Naive thymus-derived CD4-positive, alpha-beta T cell (primary cell): ENCODE measurements at regions of chr17 and their contacts with region 1.

Region 1: DNA sequence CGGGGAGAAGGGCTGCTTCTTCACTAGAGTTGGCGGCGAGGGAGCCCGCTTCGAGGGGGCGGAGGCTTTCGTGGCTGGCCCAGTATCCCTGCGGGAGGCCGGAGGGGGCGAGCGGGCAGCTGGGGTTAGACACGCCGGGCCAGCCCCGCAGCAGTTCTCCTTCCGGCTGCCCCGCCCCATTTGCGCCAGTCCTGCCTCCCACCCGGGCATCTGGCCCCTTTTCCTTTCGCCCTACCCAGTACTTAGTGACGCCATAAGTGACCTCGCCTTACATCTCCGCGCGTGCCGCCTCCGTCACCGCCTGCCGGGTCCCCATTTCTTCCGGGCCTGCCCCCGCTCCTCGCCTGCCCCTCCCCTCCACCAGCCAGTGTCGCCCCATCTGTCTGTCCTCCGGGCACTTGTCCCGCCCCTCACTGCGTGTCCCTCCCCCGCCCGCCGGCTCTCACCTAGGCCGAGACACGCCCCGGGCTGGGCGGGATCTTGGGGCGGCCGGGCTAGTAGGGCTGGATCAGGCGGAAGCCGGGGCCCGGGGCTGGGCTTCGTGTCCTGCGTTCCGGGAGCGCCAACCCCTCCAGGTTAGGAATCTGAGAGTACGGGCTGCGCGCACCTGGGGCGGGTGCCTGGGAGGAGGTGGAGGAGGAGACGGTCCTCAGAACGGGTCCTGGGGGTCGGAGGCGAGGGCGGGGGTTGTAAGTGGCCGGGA is 14.3 kb downstream of the SPATA32 start:
- DNase-seq: peak; percentile 83 to 96 (median 87)
- ATAC-seq: peak; percentile 88
- H3K4me3 ChIP-seq: peak overlapping the region; percentile 89
- H3K4me3 Mint-ChIP-seq: peak overlapping the region; percentile 88 to 93 (median 90)
- H3K27ac ChIP-seq: peak overlapping the region; percentile 95
- H3K27ac Mint-ChIP-seq: peak overlapping the region; percentile 89 to 98 (median 96)
- H3K4me1 ChIP-seq: peaks cover 26 to 42% of the 10 kb centered on the region in 2 donors
- H3K4me1 Mint-ChIP-seq: peaks cover 30 to 68% (median 61%) of the 10 kb centered on the region in 7 donors
- H3K27me3 ChIP-seq: no peaks in the 10 kb centered on the region
- H3K27me3 Mint-ChIP-seq: no peaks in the 10 kb centered on the region

Region 2: DNA sequence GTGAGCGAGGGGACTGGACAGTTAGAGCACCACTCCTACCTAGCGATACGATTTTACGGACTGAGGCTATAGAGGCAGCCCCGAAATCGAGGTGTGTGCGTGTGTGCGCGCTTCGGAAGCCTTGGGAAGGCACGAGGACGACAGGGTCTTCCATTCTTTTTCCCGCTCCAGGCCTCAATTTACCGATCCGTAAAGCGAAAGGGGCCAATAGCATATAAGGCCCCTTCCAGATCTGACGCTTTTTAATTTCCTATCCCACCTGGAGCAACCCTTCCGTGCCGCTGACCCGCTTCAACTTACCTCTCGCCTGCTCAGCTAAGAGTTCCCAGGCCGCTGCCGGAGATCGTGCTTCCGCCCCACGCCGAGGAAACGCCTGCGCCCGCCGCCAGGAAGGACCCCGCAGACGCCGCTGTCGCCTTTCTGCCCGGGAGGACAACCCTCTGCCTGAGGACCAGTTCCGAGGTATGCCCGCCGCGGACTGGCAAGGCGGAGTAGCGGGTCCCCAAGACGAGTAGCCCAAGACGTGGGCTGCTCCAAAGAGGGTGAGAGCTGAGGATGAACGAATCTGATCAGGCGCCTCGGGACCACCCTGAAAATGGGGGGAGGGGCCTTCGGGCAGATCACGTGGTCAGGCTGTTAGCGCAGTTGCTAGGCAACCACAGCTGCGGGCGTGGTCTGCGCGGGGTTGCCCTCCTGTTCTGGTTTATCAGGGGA is 348.4 kb before region 1 on chr17 and contains the start of gene EFTUD2:
- CTCF ChIA-PET with region 1: no interaction called
- POLR2A ChIA-PET with region 1: no interaction called
- intact Hi-C with region 1: loop called in 1 of 2 experiments (anchors 5 kb)
- DNase-seq: peak; percentile 91 to 99 (median 96)
- ATAC-seq: peak; percentile 94
- H3K4me3 ChIP-seq: peak within 1 kb of the TSS; percentile 89
- H3K4me3 Mint-ChIP-seq: peak within 1 kb of the TSS; percentile 84 to 97 (median 96)
- H3K27ac ChIP-seq: peak within 1 kb of the TSS; percentile 96
- H3K27ac Mint-ChIP-seq: peak within 1 kb of the TSS; percentile 99 to 100 (median 99)
- H3K4me1 ChIP-seq: peaks cover 6 to 10% of the 10 kb centered on the region in 2 donors
- H3K4me1 Mint-ChIP-seq: peaks cover 26 to 41% (median 35%) of the 10 kb centered on the region in 7 donors
- H3K27me3 ChIP-seq: no peaks in the 10 kb centered on the region
- H3K27me3 Mint-ChIP-seq: peaks cover 0 to 23% (median 0%) of the 10 kb centered on the region in 5 donors
- total RNA-seq, gene EFTUD2: 94.3 to 157 (median 120) TPM

Region 3: DNA sequence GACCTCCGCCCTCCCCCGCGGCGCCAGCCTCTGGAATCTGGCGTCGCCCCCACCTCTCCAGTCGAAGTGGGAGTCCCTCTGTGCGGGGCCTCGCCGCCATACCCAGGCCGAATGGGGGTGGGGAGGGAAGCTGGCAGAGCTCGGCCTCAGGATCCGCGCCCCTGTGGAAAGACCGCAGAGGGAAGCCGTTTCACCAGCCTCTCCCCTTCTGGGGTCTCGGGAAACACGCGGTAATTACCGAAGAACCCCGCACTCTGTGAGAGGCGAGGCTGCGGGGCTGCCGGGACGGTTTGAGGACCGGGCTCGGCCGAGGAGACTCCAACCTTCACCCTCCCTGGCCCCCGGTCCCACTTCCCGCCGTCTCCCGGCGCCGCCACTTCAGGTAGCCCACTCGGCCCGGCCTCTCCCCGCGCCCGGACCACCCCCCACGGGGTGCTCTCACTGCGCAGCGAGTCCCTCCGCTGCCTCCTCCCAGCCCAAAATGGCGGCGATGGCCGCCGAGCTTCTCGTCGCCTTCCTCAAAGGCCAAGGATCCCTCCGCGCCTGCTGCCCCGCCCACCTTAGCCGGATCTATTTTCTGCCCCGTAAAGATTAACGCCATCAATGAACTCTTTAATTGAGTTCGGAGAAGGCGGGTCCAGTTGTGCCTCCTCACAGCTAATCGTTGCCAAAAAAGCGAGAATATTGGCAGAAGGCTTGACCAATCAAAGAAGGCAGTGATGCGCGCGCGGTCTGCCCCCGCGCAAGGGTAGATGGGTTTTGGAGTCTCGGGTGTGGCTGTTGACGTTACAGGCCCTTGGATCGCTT is 86.4 kb before region 1 on chr17:
- CTCF ChIA-PET with region 1: interaction called, 4 read pairs
- POLR2A ChIA-PET with region 1: interaction called, 12 read pairs
- intact Hi-C with region 1: loop called in 1 of 2 experiments (anchors 1 kb)
- DNase-seq: peak; percentile 89 to 100 (median 99)
- ATAC-seq: peak; percentile 93
- H3K4me3 ChIP-seq: peak overlapping the region; percentile 95
- H3K4me3 Mint-ChIP-seq: peak overlapping the region; percentile 88 to 100 (median 96)
- H3K27ac ChIP-seq: peak overlapping the region; percentile 98
- H3K27ac Mint-ChIP-seq: peak overlapping the region; percentile 97 to 100 (median 98)
- H3K4me1 ChIP-seq: peaks cover 15 to 27% of the 10 kb centered on the region in 2 donors
- H3K4me1 Mint-ChIP-seq: peaks cover 29 to 48% (median 43%) of the 10 kb centered on the region in 7 donors
- H3K27me3 ChIP-seq: no peaks in the 10 kb centered on the region
- H3K27me3 Mint-ChIP-seq: no peaks in the 10 kb centered on the region

Region 4: GRCh38 chr17:45228763-45229539 is 18.6 kb before region 1 on chr17:
- CTCF ChIA-PET with region 1: interaction called, 33 read pairs
- POLR2A ChIA-PET with region 1: interaction called, 851 read pairs
- intact Hi-C with region 1: loop called (anchors 1 kb)
- DNase-seq: peak; percentile 64 to 92 (median 74)
- ATAC-seq: peak; percentile 66
- H3K4me3 ChIP-seq: peak overlapping the region; percentile 91
- H3K4me3 Mint-ChIP-seq: peak overlapping the region; percentile 83 to 99 (median 96)
- H3K27ac ChIP-seq: peak overlapping the region; percentile 96
- H3K27ac Mint-ChIP-seq: peak overlapping the region; percentile 96 to 100 (median 99)
- H3K4me1 ChIP-seq: peaks cover 62 to 77% of the 10 kb centered on the region in 2 donors
- H3K4me1 Mint-ChIP-seq: peaks cover 54 to 91% (median 77%) of the 10 kb centered on the region in 7 donors
- H3K27me3 ChIP-seq: no peaks in the 10 kb centered on the region
- H3K27me3 Mint-ChIP-seq: no peaks in the 10 kb centered on the region

Region 5: GRCh38 chr17:45261577-45262515 is 14.3 kb after region 1 on chr17 and contains the start of gene SPATA32:
- CTCF ChIA-PET with region 1: interaction called, 8 read pairs
- POLR2A ChIA-PET with region 1: interaction called, 16 read pairs
- intact Hi-C with region 1: loop called (anchors 1 kb)
- DNase-seq: peak; percentile 45 to 69 (median 66)
- ATAC-seq: peak; percentile 83
- H3K4me3 ChIP-seq: peak within 1 kb of the TSS; percentile 52
- H3K4me3 Mint-ChIP-seq: peak within 1 kb of the TSS; percentile 77 to 89 (median 84)
- H3K27ac ChIP-seq: peak within 1 kb of the TSS; percentile 85
- H3K27ac Mint-ChIP-seq: peak within 1 kb of the TSS; percentile 58 to 93 (median 86)
- H3K4me1 ChIP-seq: peaks cover 10 to 31% of the 10 kb centered on the region in 2 donors
- H3K4me1 Mint-ChIP-seq: peaks cover 22 to 55% (median 45%) of the 10 kb centered on the region in 7 donors
- H3K27me3 ChIP-seq: no peaks in the 10 kb centered on the region
- H3K27me3 Mint-ChIP-seq: no peaks in the 10 kb centered on the region
- total RNA-seq, gene SPATA32: 0.12 to 1.1 (median 0.58) TPM in 4 of 5 experiments, not detected in the other

Region 6: GRCh38 chr17:45284176-45285140 is 36.9 kb after region 1 on chr17:
- CTCF ChIA-PET with region 1: no interaction called
- POLR2A ChIA-PET with region 1: no interaction called
- intact Hi-C with region 1: no loop called
- DNase-seq: peak in 3 of 9 donors; percentile 24 to 36 (median 29)
- ATAC-seq: peak; percentile 65
- H3K4me3 ChIP-seq: no peak overlapping the region
- H3K4me3 Mint-ChIP-seq: no peak overlapping the region
- H3K27ac ChIP-seq: no peak overlapping the region
- H3K27ac Mint-ChIP-seq: peak overlapping the region in 8 of 9 donors; percentile 3 to 90 (median 68)
- H3K4me1 ChIP-seq: no peaks in the 10 kb centered on the region
- H3K4me1 Mint-ChIP-seq: peaks cover 0 to 11% (median 2%) of the 10 kb centered on the region in 7 donors
- H3K27me3 ChIP-seq: no peaks in the 10 kb centered on the region
- H3K27me3 Mint-ChIP-seq: no peaks in the 10 kb centered on the region

Region 7: DNA sequence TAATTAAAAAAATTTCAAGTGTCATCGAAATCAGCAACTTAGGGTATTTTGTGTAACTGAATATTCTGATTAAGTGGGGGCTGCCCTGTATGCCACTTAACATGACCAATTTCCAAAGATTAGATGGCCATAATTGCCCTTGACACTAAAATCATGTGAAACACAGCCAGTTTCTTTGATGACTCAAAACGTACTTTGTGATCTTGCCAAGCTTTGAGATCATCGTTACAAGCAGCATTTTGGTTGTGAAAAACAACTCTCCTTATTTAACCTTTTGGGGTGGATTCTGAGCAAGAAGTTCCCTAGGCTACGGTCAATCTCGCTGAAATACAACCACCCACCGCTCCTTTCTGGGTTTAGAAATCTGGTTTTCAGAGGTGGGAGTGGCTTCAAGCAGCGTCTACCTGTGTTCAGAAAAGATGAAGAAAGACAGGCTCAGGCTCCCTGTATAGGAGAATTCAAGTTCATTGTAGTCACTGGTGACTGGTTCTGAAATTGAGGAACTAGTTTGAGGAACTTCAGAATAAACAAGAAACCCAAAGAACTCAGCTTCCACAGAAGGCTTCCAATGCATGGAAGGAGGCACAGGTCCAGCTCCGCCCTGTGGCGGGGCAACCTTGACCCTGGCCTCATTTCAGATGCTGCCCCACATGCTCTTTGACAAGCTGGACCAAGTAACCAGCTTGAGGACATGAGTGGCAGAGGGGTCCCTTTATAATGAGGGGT is 59.9 kb after region 1 on chr17:
- CTCF ChIA-PET with region 1: interaction called, 12 read pairs
- POLR2A ChIA-PET with region 1: interaction called, 16 read pairs
- intact Hi-C with region 1: loop called in 1 of 2 experiments (anchors 1 kb)
- DNase-seq: peak in 6 of 9 donors; percentile 27 to 57 (median 45)
- ATAC-seq: peak; percentile 75
- H3K4me3 ChIP-seq: peak overlapping the region; percentile 13
- H3K4me3 Mint-ChIP-seq: peak overlapping the region in 8 of 10 donors; percentile 15 to 74 (median 50)
- H3K27ac ChIP-seq: peak overlapping the region; percentile 48
- H3K27ac Mint-ChIP-seq: peak overlapping the region; percentile 71 to 93 (median 83)
- H3K4me1 ChIP-seq: peaks cover 31 to 51% of the 10 kb centered on the region in 2 donors
- H3K4me1 Mint-ChIP-seq: peaks cover 56 to 87% (median 80%) of the 10 kb centered on the region in 7 donors
- H3K27me3 ChIP-seq: no peaks in the 10 kb centered on the region
- H3K27me3 Mint-ChIP-seq: no peaks in the 10 kb centered on the region

Region 8: DNA sequence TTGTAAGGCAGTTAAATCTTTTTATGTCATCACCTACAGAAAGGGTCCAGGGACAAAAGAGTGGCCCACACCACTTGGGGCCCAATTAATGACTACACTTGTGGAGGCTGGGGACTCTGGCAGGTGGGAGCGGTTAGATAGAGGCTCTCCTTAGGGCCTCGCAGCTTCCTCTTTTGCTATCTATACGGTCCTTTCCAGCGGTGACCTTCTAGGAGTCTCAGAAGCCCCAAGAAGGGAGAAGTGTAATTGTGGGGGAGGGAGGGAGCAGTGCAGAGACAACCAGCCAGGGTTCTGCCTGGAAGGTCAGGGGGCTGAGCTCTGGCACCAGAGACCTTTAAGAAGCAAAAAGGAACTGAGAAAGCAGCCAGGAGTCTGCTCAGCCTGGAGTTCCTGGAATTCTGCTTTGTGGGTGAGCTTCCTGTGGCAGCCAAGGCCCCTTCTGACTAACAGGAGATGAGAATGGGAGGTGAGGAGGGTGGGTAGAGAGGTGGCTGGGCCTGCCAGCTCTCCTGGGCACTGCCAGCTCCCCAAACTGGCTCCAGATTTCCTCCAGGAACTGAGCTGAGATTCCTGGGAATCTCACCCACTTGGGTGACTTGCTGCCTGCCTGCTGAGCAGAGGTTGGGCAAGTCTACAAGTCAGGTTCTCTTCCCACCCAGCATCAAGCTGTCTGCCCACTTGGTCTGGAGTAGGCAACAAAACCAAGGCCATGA is 85.6 kb after region 1 on chr17:
- CTCF ChIA-PET with region 1: no interaction called
- POLR2A ChIA-PET with region 1: no interaction called
- intact Hi-C with region 1: no loop called
- DNase-seq: no peak
- ATAC-seq: peak; percentile 69
- H3K4me3 ChIP-seq: no peak overlapping the region
- H3K4me3 Mint-ChIP-seq: peak overlapping the region in 1 of 10 donors; percentile 60
- H3K27ac ChIP-seq: no peak overlapping the region
- H3K27ac Mint-ChIP-seq: peak overlapping the region in 1 of 9 donors; percentile 66
- H3K4me1 ChIP-seq: no peaks in the 10 kb centered on the region
- H3K4me1 Mint-ChIP-seq: peaks cover 0 to 26% (median 0%) of the 10 kb centered on the region in 7 donors
- H3K27me3 ChIP-seq: no peaks in the 10 kb centered on the region
- H3K27me3 Mint-ChIP-seq: no peaks in the 10 kb centered on the region

Region 9: GRCh38 chr17:45428050-45428617 is 180.6 kb after region 1 on chr17:
- CTCF ChIA-PET with region 1: no interaction called
- POLR2A ChIA-PET with region 1: no interaction called
- intact Hi-C with region 1: no loop called
- DNase-seq: peak; percentile 62 to 93 (median 81)
- ATAC-seq: peak; percentile 87
- H3K4me3 ChIP-seq: peak overlapping the region; percentile 17
- H3K4me3 Mint-ChIP-seq: peak overlapping the region; percentile 70 to 81 (median 78)
- H3K27ac ChIP-seq: no peak overlapping the region
- H3K27ac Mint-ChIP-seq: peak overlapping the region in 5 of 9 donors; percentile 3 to 82 (median 15)
- H3K4me1 ChIP-seq: peaks cover 11 to 14% of the 10 kb centered on the region in 2 donors
- H3K4me1 Mint-ChIP-seq: peaks cover 14 to 27% (median 25%) of the 10 kb centered on the region in 7 donors
- H3K27me3 ChIP-seq: no peaks in the 10 kb centered on the region
- H3K27me3 Mint-ChIP-seq: no peaks in the 10 kb centered on the region